SK-N-SH (cell line): ENCODE measurements at regions of chr7 and their contacts with region 1.

Region 1: DNA sequence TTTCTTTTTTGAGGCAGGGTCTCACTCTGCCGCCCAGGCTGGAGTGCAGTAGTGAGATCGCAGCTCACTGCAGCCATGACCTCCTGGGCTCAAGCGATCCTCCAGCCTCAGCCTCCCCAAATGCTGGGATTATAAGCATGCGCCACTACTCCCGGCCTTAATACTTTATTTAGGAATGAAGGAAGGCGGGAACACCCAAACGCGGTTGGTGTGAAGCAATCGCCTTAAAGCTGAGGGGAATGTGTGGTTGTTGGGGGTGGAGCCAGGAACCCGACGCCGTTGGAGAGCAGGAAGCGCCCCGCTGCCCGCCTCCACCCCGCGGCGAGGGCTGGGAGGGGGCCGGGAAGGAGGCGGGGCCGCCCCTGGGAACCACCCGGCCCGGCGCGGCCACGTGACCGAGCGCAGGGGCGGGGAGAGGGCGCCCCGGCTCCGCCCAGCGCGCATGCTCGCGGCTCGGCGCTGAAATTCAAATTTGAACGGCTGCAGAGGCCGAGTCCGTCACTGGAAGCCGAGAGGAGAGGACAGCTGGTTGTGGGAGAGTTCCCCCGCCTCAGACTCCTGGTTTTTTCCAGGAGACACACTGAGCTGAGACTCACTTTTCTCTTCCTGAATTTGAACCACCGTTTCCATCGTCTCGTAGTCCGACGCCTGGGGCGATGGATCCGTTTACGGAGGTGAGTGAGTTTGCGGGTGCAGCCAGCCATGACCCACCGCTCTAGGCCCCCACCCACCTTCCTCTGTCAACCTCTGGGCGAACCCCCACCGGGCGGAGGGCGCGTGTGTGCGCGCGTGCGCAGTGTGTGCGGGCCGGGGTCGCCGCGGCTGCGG is at the start of gene ANLN:
- DNase-seq: peak; percentile 100
- H3K4me3 ChIP-seq: peak within 1 kb of the TSS; percentile 85 to 97
- H3K27ac ChIP-seq: peak within 1 kb of the TSS; percentile 87 to 94
- H3K4me1 ChIP-seq: peaks cover 23 to 25% of the 10 kb centered on the region in 2 experiments
- H3K27me3 ChIP-seq: no peaks in the 10 kb centered on the region
- CTCF ChIP-seq: no peak
- EP300 ChIP-seq: no peak
- RAD21 ChIP-seq: no peak
- polyA plus RNA-seq, gene ANLN: 17.1 and 21.2 TPM in 2 replicates

Region 2: GRCh38 chr7:36192053-36192824 is 197.3 kb before region 1 on chr7:
- CTCF ChIA-PET with region 1: no interaction called
- POLR2A ChIA-PET with region 1: no interaction called
- DNase-seq: no peak
- H3K4me3 ChIP-seq: no peak overlapping the region
- H3K27ac ChIP-seq: no peak overlapping the region
- H3K4me1 ChIP-seq: peaks cover 0 to 15% of the 10 kb centered on the region in 2 experiments; a peak in 2 of 4 replicates
- H3K27me3 ChIP-seq: no peaks in the 10 kb centered on the region
- CTCF ChIP-seq: no peak
- EP300 ChIP-seq: no peak
- RAD21 ChIP-seq: no peak

Region 3: DNA sequence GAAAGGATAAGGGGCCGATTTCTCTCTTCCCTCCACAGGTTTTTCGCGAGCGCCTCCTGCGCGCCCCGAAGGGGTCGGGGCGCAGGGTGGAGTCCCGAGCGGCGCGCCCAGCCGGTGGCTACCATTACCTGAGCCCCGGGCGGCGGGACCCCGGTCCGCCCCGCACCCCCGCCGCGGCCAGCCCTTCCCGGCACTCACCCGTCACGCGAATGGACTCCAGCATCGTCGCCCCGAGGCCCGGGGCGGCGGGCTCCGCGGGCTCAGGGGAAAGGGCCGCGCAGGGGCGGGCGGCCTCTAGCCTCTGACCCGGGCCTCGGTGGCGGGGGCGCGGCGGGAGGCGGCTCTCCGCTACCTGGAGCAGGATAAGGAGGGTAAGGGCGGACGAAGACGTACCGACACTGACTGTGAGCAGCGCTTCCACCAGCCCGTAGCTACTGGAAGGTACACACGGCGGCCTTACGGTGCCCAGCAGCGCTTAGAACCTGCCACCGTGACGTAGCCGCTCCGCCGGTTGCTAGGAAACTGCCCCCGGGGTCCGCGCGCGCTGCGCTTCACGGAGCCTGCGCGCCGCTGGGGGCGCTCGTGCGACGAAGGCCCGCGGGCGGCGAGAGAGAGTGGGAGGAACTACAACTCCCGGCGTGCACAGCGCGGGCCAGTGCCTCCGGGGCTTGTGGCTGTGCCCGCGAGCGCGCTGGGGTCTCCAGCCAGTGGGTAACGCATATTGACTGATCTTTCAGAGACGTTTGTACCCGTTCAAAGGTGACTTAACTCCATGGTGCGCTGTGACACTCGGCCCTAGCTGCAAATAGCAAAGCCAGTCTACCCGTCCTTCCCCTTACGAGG is 22.6 kb before region 1 on chr7:
- CTCF ChIA-PET with region 1: interaction called, 33 read pairs
- POLR2A ChIA-PET with region 1: interaction called, 13 read pairs
- DNase-seq: peak; percentile 99
- H3K4me3 ChIP-seq: peak overlapping the region; percentile 70 to 82
- H3K27ac ChIP-seq: peak overlapping the region; percentile 42 to 67; a peak in 3 of 4 replicates
- H3K4me1 ChIP-seq: no peaks in the 10 kb centered on the region; a peak in 2 of 4 replicates
- H3K27me3 ChIP-seq: no peaks in the 10 kb centered on the region
- CTCF ChIP-seq: peak; percentile 95
- EP300 ChIP-seq: peak in 1 of 2 experiments; percentile 38; a peak in 1 of 4 replicates
- RAD21 ChIP-seq: peak; percentile 61

Region 4: DNA sequence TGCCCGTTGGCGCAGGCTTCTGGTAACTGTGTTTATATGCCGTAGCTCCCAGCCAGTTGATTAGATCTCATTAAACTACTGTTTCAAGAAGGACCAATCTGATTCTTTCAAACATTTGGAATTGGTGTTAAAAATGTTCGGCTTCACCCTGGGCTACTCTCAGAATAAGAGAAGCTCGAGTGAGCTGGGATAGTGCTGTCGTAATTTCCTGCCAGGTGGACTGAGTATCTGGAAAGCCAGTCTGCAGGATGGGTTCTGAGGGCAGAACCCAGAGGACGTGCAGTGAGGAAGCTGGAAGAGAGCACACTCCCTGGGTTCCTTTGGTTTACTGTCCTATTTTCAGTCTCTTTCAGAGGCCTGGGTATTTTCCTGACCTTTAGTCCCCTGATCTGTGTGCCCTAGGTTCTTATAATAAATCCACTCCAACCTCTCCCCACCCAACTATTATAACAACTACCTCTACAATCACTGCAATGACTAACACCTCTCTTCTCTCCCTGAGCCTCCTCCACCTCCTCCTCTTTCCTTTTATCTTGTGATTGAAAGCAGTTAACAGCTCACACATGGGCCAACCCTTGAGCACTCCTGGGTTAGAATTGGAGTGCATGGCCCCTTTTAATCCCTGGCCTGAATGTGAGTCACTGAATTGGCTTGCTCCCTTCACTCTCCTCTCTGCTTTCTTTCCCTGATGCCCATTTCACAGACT is 271.7 kb after region 1 on chr7:
- CTCF ChIA-PET with region 1: no interaction called
- POLR2A ChIA-PET with region 1: no interaction called
- DNase-seq: no peak
- H3K4me3 ChIP-seq: no peak overlapping the region
- H3K27ac ChIP-seq: no peak overlapping the region
- H3K4me1 ChIP-seq: peaks cover 14 to 18% of the 10 kb centered on the region in 2 experiments
- H3K27me3 ChIP-seq: no peaks in the 10 kb centered on the region
- CTCF ChIP-seq: no peak
- EP300 ChIP-seq: no peak
- RAD21 ChIP-seq: no peak

Region 5: GRCh38 chr7:37081436-37081835 is 691.9 kb after region 1 on chr7:
- CTCF ChIA-PET with region 1: no interaction called
- POLR2A ChIA-PET with region 1: no interaction called
- DNase-seq: no peak
- H3K4me3 ChIP-seq: no peak overlapping the region
- H3K27ac ChIP-seq: no peak overlapping the region
- H3K4me1 ChIP-seq: no peaks in the 10 kb centered on the region; a peak in 1 of 4 replicates
- H3K27me3 ChIP-seq: no peaks in the 10 kb centered on the region
- CTCF ChIP-seq: no peak
- EP300 ChIP-seq: no peak
- RAD21 ChIP-seq: no peak